ENCODE measurements at regions of chr21 and their contacts with region 1.

Region 1: DNA sequence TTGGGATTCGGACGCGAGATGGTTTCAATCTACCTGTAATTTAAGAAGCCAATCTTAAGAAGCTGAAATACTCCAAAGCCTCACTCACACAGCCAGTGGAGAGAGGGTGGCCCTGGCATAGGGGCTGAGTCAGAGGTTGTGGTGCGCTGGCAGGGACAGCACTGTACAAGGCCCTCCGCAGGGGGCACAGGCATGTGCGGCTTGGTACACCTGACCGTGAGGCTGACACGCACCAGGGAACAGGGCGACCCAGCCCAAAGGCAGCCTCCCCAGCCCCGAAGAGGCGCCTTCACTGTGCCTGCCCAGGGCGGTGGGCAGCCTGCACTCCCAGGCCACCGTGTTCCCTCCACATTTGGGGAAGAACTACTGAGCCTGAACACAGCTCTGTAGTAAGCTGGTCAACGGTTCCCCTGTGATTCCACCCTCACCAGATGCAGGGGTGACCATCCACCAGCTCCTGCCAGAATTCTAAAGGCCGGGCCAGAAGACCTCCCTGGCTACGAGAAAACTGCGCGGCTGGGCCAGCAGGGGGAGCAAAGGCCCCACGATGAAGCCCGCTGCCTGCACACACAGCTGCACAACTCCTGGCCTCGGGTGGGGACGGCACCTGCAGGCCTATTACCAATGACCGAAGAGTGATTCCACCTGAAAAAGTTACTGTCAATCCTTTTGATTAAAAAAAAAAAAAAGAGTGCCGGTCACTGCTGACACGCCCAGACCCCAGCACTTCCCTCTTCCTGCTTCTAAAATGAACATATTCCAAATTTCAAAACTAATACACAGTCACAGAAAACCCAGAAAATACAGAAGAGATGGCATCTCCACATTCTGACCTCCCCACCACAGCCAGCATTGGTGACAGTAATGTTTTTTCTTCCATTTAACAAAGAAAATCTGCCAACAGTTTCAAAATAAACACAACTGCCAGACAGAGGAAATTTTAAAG is 49.6 kb upstream of the RIPK4 start:
- DNase-seq: peak; percentile 88
- H3K4me3 ChIP-seq: peak overlapping the region in 1 of 2 experiments; percentile 35; a peak in 1 of 4 replicates
- H3K27ac ChIP-seq: peak overlapping the region in 1 of 2 experiments; percentile 37; a peak in 1 of 4 replicates
- H3K4me1 ChIP-seq: peaks cover 0 to 1% of the 10 kb centered on the region in 2 experiments; a peak in 2 of 4 replicates
- H3K27me3 ChIP-seq: no peaks in the 10 kb centered on the region
- CTCF ChIP-seq: peak; percentile 76
- EP300 ChIP-seq: no peak
- RAD21 ChIP-seq: peak; percentile 78

Region 2: GRCh38 chr21:41589131-41589530 is 227.4 kb before region 1 on chr21:
- CTCF ChIA-PET with region 1: no interaction called
- POLR2A ChIA-PET with region 1: no interaction called
- DNase-seq: no peak
- H3K4me3 ChIP-seq: no peak overlapping the region
- H3K27ac ChIP-seq: no peak overlapping the region
- H3K4me1 ChIP-seq: no peaks in the 10 kb centered on the region
- H3K27me3 ChIP-seq: no peaks in the 10 kb centered on the region; the same call in 1 of the 2 replicates
- CTCF ChIP-seq: no peak; the same call in 1 of the 2 replicates
- EP300 ChIP-seq: no peak
- RAD21 ChIP-seq: no peak

Region 3: DNA sequence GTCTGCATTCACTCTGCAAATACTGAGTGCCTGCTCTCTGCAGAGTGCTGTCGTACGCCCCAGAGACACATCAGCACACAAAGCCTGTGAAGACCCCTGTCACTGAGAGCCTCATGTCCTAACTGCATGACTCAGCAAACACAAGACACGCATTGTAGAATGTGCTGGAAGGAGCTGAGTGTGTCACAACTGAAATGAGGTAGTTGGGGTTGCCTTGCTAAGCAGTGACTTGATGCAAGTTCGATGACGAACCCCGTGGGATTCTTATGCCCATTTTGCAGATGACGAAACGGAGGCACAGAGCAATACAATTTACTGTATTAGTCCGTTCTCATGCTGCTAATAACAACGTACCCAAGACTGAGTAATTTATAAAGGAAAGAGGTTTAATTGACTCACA is 114.7 kb before region 1 on chr21:
- CTCF ChIA-PET with region 1: no interaction called
- POLR2A ChIA-PET with region 1: no interaction called
- DNase-seq: no peak
- H3K4me3 ChIP-seq: no peak overlapping the region
- H3K27ac ChIP-seq: no peak overlapping the region
- H3K4me1 ChIP-seq: no peaks in the 10 kb centered on the region
- H3K27me3 ChIP-seq: no peaks in the 10 kb centered on the region
- CTCF ChIP-seq: no peak
- EP300 ChIP-seq: no peak
- RAD21 ChIP-seq: no peak

Region 4: DNA sequence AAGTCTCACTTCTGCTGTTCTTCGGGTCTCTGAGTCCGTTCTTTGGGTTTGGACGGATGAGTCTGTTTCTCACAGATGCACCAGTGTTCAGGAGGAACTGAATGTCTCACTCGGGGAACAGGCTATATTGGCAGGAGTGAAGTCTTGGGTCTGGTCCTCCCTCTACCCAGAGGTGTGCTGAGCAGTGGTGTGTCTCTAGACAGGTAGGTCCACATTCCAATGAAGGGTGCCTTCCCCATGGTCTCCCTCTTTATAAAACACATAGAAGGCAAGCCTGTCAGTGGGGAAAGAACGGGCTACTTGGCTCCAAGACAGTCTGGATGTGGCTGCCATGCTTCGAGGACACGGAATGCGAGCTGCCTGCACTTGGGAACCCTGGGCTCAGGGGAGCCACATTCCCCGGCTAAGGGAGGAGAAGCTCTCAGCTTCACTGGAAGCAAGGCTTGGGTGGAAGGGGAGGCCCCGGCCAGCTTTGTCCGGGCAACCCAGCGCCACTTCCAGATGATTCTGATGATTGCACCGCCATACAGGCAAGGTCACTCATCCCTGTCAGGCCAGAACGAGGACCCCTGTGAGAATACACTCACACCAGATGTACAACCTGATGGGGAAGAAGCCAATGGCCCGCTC is 19.9 kb before region 1 on chr21:
- CTCF ChIA-PET with region 1: interaction called, 17 read pairs
- POLR2A ChIA-PET with region 1: no interaction called
- DNase-seq: no peak
- H3K4me3 ChIP-seq: no peak overlapping the region
- H3K27ac ChIP-seq: no peak overlapping the region
- H3K4me1 ChIP-seq: no peaks in the 10 kb centered on the region
- H3K27me3 ChIP-seq: no peaks in the 10 kb centered on the region; the same call in 1 of the 2 replicates
- CTCF ChIP-seq: no peak
- EP300 ChIP-seq: no peak
- RAD21 ChIP-seq: no peak

Region 5: GRCh38 chr21:41832596-41833496 is 16.4 kb after region 1 on chr21:
- CTCF ChIA-PET with region 1: interaction called, 20 read pairs
- POLR2A ChIA-PET with region 1: no interaction called
- DNase-seq: no peak
- H3K4me3 ChIP-seq: no peak overlapping the region
- H3K27ac ChIP-seq: no peak overlapping the region
- H3K4me1 ChIP-seq: no peaks in the 10 kb centered on the region
- H3K27me3 ChIP-seq: no peaks in the 10 kb centered on the region
- CTCF ChIP-seq: no peak
- EP300 ChIP-seq: no peak
- RAD21 ChIP-seq: no peak

Region 6: GRCh38 chr21:42102076-42102475 is 285.6 kb after region 1 on chr21:
- CTCF ChIA-PET with region 1: interaction called, 55 read pairs
- POLR2A ChIA-PET with region 1: no interaction called
- DNase-seq: no peak
- H3K4me3 ChIP-seq: no peak overlapping the region
- H3K27ac ChIP-seq: no peak overlapping the region
- H3K4me1 ChIP-seq: peaks cover 0 to 8% of the 10 kb centered on the region in 2 experiments; a peak in 2 of 4 replicates
- H3K27me3 ChIP-seq: no peaks in the 10 kb centered on the region
- CTCF ChIP-seq: no peak
- EP300 ChIP-seq: no peak
- RAD21 ChIP-seq: no peak

Region 7: GRCh38 chr21:42117229-42117966 is 300.9 kb after region 1 on chr21:
- CTCF ChIA-PET with region 1: interaction called, 56 read pairs
- POLR2A ChIA-PET with region 1: no interaction called
- DNase-seq: peak; percentile 83
- H3K4me3 ChIP-seq: peak overlapping the region; percentile 15 to 53; a peak in 3 of 4 replicates
- H3K27ac ChIP-seq: no peak overlapping the region
- H3K4me1 ChIP-seq: peaks cover 0 to 29% of the 10 kb centered on the region in 2 experiments; a peak in 1 of 4 replicates
- H3K27me3 ChIP-seq: peaks cover 19% of the 10 kb centered on the region
- CTCF ChIP-seq: peak; percentile 91
- EP300 ChIP-seq: no peak; a peak in 1 of 4 replicates
- RAD21 ChIP-seq: peak; percentile 88